ENCODE measurements at regions of chr5 and their contacts with region 1.

Region 1: DNA sequence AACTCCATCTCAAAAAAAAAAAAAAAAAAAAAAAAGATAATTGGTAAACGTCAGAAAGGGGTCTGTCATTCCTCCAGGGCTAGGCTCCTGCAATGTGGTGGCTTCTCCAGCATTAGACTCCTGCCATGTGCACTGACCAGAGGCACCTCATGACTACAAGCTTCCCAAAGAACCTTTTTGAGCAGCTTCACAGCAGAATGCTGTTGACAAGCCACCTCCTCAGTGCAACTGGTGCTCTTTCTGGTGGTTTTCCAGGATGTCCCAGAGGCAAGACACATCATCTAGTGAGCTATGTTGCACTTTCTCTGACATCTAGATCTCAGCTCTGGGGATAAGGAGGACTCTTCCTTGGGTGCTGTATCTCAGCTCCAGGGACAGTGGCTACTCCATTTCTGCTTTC is 11.6 kb downstream of the RPL37 start:
- DNase-seq: no peak
- ATAC-seq: peak; percentile 2; the same call in 1 of the 2 replicates
- H3K4me3 Mint-ChIP-seq: no peak overlapping the region
- H3K27ac Mint-ChIP-seq: peak overlapping the region; percentile 38
- H3K4me1 Mint-ChIP-seq: peaks cover 7% of the 10 kb centered on the region
- H3K27me3 Mint-ChIP-seq: no peaks in the 10 kb centered on the region
- CTCF ChIP-seq: no peak

Region 2: DNA sequence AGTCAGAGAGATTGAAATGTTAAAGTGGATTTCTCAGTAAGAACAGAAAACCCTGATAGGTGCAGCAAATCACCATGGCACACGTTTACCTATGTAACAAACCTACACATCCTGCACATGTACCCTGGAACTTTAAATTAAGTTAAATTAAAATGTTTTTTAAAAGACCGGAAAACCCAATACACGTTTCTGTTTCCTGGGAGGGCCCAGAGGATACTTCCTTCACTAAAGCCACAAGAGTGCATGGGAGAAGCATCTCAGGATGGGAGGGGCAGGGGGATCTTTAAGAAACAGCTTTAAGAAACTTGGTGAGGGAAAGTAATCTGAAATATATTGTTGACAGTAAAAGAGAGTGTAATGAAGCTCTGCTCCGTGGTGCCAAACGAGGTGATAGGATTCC is 308.5 kb before region 1 on chr5:
- CTCF ChIA-PET with region 1: no interaction called
- POLR2A ChIA-PET with region 1: no interaction called
- DNase-seq: no peak
- ATAC-seq: no peak
- H3K4me3 Mint-ChIP-seq: no peak overlapping the region
- H3K27ac Mint-ChIP-seq: no peak overlapping the region
- H3K4me1 Mint-ChIP-seq: no peaks in the 10 kb centered on the region
- H3K27me3 Mint-ChIP-seq: no peaks in the 10 kb centered on the region
- CTCF ChIP-seq: no peak

Region 3: GRCh38 chr5:40798012-40798855 is 25.2 kb before region 1 on chr5 and contains the start of gene PRKAA1:
- CTCF ChIA-PET with region 1: interaction called, 13 read pairs
- POLR2A ChIA-PET with region 1: interaction called, 16 read pairs
- DNase-seq: peak; percentile 91
- ATAC-seq: peak; percentile 94
- H3K4me3 Mint-ChIP-seq: peak within 1 kb of the TSS; percentile 86
- H3K27ac Mint-ChIP-seq: peak within 1 kb of the TSS; percentile 95
- H3K4me1 Mint-ChIP-seq: peaks cover 49% of the 10 kb centered on the region
- H3K27me3 Mint-ChIP-seq: no peaks in the 10 kb centered on the region; the same call in 1 of the 2 replicates
- CTCF ChIP-seq: peak; percentile 66
- total RNA-seq, gene PRKAA1: 27.9 to 31.2 TPM (median 30.2 TPM) in 3 replicates